Panc1 (cell line): ENCODE measurements at regions of chr9 and their contacts with region 1.

Region 1: DNA sequence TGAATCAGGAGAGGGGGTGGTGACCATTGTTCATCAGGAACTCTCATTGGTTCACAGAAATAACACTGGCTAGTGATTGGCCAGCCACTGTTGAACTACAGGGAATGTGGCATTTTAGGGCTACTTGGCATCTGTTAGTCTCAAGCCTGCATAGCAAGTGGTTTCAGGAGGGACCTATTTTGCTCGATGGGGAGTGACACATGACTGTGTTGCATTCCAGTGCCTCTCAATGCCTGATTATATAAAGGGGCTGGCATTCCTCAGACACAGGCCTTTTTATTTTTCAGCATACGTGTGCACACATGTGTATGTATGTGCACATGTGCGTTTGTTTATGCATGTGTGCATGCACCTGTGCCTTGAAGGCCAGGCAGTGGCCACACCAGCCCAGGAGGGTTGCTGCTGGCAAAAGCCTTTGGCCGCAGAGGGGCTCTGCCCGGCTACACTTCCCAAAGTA is 23.2 kb downstream of the FGD3 start:
- DNase-seq: no peak
- ATAC-seq: no peak
- H3K4me3 ChIP-seq: no peak overlapping the region
- H3K27ac ChIP-seq: no peak overlapping the region
- H3K4me1 ChIP-seq: no peaks in the 10 kb centered on the region
- H3K27me3 ChIP-seq: no peaks in the 10 kb centered on the region
- CTCF ChIP-seq: no peak

Region 2: DNA sequence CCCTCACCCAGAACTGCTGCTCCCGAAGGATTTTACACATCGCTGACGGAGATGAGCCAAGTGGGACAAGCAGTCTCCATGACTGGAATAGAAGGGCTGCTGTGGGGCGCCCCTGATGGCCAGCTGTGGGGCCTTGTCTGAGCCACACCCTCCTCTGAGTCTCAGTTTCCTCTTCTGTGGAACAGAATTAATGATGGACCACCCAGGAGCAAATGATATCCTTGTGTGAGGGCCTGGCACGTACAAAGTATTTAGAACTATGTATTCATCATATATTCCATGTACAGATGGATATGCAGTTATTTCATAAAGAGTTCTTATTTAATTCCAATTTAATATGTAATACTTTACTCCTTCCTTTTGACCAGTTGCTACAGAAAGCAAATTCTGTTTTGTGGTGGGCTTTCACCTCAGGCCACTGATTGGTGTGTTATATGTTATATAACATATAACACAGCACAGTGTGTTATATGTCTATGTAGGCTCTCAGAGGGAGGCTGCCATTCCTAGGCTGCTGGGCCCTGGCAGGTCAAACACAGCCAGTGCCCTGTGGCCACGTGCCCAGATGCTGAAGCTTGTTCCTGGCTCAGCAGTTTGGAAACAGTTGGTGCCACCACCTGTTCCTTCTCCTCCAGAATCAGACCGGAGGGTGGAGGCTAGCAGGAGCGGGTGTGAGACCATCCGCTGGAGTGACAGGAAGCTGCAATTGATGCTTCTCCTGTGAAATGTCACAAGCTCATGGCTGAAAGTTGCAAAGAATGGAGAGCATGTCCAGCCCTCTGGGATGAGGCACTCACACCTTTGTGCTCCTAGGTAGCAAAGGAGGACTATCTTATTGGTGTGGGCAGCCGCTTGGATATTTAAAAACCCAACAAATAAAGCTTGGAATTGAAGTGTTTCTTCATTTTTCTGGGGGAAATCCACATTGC is 27.5 kb before region 1 on chr9:
- CTCF ChIA-PET with region 1: no interaction called
- POLR2A ChIA-PET with region 1: no interaction called
- in situ Hi-C with region 1: no loop called
- intact Hi-C with region 1: no loop called
- DNase-seq: no peak
- ATAC-seq: no peak
- H3K4me3 ChIP-seq: no peak overlapping the region
- H3K27ac ChIP-seq: no peak overlapping the region
- H3K4me1 ChIP-seq: peaks cover 3% of the 10 kb centered on the region; the same call in 1 of the 2 replicates
- H3K27me3 ChIP-seq: no peaks in the 10 kb centered on the region; the same call in 1 of the 2 replicates
- CTCF ChIP-seq: no peak

Region 3: GRCh38 chr9:92983984-92984589 is 13.6 kb after region 1 on chr9:
- CTCF ChIA-PET with region 1: no interaction called
- POLR2A ChIA-PET with region 1: no interaction called
- in situ Hi-C with region 1: no loop called
- intact Hi-C with region 1: no loop called
- DNase-seq: no peak
- ATAC-seq: no peak
- H3K4me3 ChIP-seq: no peak overlapping the region
- H3K27ac ChIP-seq: no peak overlapping the region
- H3K4me1 ChIP-seq: no peaks in the 10 kb centered on the region
- H3K27me3 ChIP-seq: no peaks in the 10 kb centered on the region
- CTCF ChIP-seq: no peak

Region 4: DNA sequence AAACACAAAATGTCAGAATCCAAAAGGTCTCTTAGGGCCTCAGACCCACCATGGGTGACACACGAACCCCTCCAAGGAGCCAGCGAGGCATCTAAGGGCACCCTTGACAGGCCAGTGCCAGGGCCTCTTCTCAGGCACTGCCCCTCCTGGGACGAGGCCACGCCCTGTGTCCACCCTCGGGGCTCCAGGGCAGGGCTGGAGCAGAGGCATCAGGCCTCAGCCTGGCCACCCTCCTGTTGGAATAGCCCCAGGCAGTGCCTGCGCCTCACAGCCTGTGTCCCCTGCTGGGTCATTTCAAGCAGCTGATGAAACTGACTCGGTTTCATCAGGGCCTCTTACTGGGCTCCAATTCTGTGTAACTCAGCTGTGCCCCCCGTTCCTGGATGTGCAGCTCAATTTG is 55.2 kb after region 1 on chr9:
- CTCF ChIA-PET with region 1: interaction called, 10 read pairs
- POLR2A ChIA-PET with region 1: no interaction called
- in situ Hi-C with region 1: no loop called
- intact Hi-C with region 1: no loop called
- DNase-seq: no peak
- ATAC-seq: no peak
- H3K4me3 ChIP-seq: no peak overlapping the region
- H3K27ac ChIP-seq: no peak overlapping the region
- H3K4me1 ChIP-seq: no peaks in the 10 kb centered on the region
- H3K27me3 ChIP-seq: no peaks in the 10 kb centered on the region
- CTCF ChIP-seq: no peak

Region 5: GRCh38 chr9:93051680-93052089 is 81.2 kb after region 1 on chr9:
- CTCF ChIA-PET with region 1: no interaction called
- POLR2A ChIA-PET with region 1: no interaction called
- in situ Hi-C with region 1: no loop called
- intact Hi-C with region 1: no loop called
- DNase-seq: no peak
- ATAC-seq: no peak
- H3K4me3 ChIP-seq: no peak overlapping the region
- H3K27ac ChIP-seq: no peak overlapping the region
- H3K4me1 ChIP-seq: no peaks in the 10 kb centered on the region; the same call in 1 of the 2 replicates
- H3K27me3 ChIP-seq: no peaks in the 10 kb centered on the region
- CTCF ChIP-seq: no peak